Panc1 (cell line): ENCODE measurements at regions of chr2 and their contacts with region 1.

Region 1: DNA sequence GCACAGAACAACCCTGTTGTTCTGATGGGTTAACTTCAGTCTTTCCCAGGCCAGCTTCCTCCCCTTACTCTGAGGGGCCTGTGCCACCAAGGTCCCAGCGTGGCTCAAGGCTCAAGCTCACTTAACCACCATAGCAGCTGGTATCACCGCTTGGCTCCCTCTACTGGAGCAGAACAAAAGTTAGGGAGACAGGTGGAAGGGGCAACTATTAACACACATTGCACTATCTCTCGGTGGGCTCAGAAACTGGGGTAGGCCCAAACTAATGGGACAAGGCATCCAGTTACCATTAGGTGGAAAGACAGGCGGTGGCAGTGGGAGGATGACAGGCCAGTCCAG is 88.7 kb upstream of the ATL2 start:
- DNase-seq: peak; percentile 18
- ATAC-seq: peak; percentile 81
- H3K4me3 ChIP-seq: no peak overlapping the region
- H3K27ac ChIP-seq: no peak overlapping the region
- H3K4me1 ChIP-seq: no peaks in the 10 kb centered on the region
- H3K27me3 ChIP-seq: no peaks in the 10 kb centered on the region
- CTCF ChIP-seq: peak; percentile 88

Region 2: GRCh38 chr2:37436323-37436722 is 1029.4 kb before region 1 on chr2:
- CTCF ChIA-PET with region 1: no interaction called
- POLR2A ChIA-PET with region 1: no interaction called
- in situ Hi-C with region 1: no loop called
- intact Hi-C with region 1: no loop called
- DNase-seq: no peak
- ATAC-seq: no peak
- H3K4me3 ChIP-seq: no peak overlapping the region
- H3K27ac ChIP-seq: no peak overlapping the region
- H3K4me1 ChIP-seq: no peaks in the 10 kb centered on the region
- H3K27me3 ChIP-seq: no peaks in the 10 kb centered on the region
- CTCF ChIP-seq: no peak

Region 3: DNA sequence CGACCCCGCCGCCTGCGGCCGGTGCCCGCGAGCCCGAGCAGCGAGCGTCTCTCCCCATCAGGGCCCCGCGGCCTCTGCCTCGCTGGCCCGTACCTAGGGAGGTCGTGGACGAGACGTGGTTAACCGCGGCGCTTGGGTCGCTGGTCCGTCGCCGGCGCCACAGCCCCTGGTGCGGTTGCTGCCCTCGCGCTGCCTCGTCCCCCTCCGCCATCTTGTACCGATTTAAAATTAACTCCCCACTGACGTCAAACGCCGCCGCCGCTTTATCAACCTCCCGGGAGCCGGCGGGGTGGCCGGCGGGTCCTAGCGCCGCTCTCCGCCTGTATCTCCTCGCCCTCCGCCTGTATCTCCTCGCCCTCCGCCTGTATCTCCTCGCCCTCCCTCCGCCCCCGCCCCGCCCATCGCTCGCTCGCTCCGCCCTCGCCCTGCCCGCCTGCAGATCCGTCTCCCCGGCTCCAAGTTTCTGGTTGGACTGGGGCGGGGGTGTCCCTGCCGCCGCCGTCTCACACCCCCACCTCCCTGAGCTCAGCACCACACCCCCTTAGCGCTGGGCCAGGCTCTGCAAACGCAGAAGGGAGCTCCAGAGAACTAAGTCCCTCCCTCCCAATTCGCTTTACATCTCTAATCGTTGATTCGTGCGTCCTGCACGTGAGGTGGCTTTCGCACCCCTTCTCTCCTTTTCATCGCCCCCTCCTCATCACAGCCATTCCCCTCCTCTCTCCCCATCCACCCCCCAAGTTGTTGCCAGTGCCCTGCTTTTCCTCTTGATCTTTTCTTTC is 88.5 kb before region 1 on chr2 and contains the start of gene ATL2:
- CTCF ChIA-PET with region 1: interaction called, 10 read pairs
- POLR2A ChIA-PET with region 1: interaction called, 5 read pairs
- in situ Hi-C with region 1: no loop called
- intact Hi-C with region 1: loop called (anchors 5 kb)
- DNase-seq: peak; percentile 43
- ATAC-seq: peak; percentile 92
- H3K4me3 ChIP-seq: peak within 1 kb of the TSS; percentile 82 to 95
- H3K27ac ChIP-seq: peak within 1 kb of the TSS; percentile 88
- H3K4me1 ChIP-seq: peaks cover 31% of the 10 kb centered on the region
- H3K27me3 ChIP-seq: no peaks in the 10 kb centered on the region
- CTCF ChIP-seq: no peak
- total RNA-seq, gene ATL2: 78.7 TPM

Region 4: DNA sequence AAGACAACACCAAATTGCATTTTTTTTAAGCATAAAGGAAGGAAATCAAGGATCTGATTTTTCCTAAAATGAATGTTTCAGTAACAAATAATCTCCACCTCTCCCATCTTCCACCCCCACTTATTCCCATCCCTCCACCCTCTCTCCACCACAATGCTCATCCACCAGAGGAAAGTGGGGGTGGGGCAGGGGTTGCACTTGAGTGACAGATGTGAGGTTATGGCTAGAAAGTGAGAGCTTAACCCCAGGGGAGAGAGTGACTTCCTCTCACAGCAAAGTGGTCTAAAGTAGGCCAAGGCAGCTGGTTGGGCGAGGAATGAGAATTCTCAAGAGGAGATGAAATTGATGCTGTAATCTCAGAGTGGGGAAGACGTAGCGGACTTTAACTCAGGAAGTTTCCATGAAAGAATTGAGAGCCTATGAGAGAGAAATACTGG is 32.3 kb after region 1 on chr2:
- CTCF ChIA-PET with region 1: no interaction called
- POLR2A ChIA-PET with region 1: no interaction called
- in situ Hi-C with region 1: no loop called
- intact Hi-C with region 1: no loop called
- DNase-seq: no peak
- ATAC-seq: no peak
- H3K4me3 ChIP-seq: no peak overlapping the region
- H3K27ac ChIP-seq: no peak overlapping the region
- H3K4me1 ChIP-seq: no peaks in the 10 kb centered on the region
- H3K27me3 ChIP-seq: no peaks in the 10 kb centered on the region
- CTCF ChIP-seq: no peak